Mammary epithelial cell (primary cell): ENCODE measurements at regions of chr22 and their contacts with region 1.

Region 1: GRCh38 chr22:26658671-26659478 is 1.5 kb downstream of the MIAT start:
- DNase-seq: peak; percentile 92
- H3K4me3 ChIP-seq: peak overlapping the region in 2 of 3 experiments; percentile 24 to 29
- H3K27ac ChIP-seq: no peak overlapping the region
- H3K4me1 ChIP-seq: peaks cover 19% of the 10 kb centered on the region
- H3K27me3 ChIP-seq: peaks cover 9% of the 10 kb centered on the region
- CTCF ChIP-seq: no peak

Region 2: DNA sequence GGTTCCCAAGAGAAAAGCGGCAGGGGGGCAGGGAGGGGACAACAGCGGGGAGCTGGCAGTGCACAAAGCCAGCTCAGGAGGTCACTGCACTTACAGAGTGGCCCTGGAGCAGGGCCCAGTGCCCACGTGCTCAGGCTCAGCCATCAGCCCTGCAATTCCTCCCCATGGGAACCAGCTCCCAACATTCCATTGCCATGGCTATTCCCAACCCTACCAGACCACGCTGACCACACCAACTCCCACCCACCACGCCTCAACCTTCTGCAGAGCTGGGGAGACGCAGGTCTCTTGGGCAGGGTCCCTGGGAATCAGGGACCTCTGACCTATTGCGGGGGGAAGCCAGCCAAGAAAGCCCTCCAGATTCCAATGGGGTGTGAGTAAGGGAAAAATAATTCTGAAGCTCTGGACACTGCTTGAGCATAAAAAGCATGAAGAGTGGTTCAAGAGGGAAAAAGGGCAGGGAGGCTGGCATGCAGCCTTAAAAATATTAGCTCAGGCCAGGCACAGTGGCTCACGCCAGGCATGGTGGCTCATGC is 108.3 kb before region 1 on chr22:
- CTCF ChIA-PET with region 1: no interaction called
- dilution Hi-C with region 1: no loop called
- in situ Hi-C with region 1: no loop called
- intact Hi-C with region 1: loop called (anchors 5 kb)
- DNase-seq: no peak
- H3K4me3 ChIP-seq: no peak overlapping the region
- H3K27ac ChIP-seq: no peak overlapping the region
- H3K4me1 ChIP-seq: peaks cover 60% of the 10 kb centered on the region
- H3K27me3 ChIP-seq: no peaks in the 10 kb centered on the region
- CTCF ChIP-seq: no peak